ENCODE measurements at regions of chr2 and their contacts with region 1.

Region 1: GRCh38 chr2:177164584-177165052 is 48.0 kb upstream of the HNRNPA3 start:
- DNase-seq: peak in 1 of 2 donors; percentile 92
- H3K4me3 ChIP-seq: peak overlapping the region; percentile 24 to 41
- H3K27ac ChIP-seq: peak overlapping the region; percentile 93
- H3K4me1 ChIP-seq: peaks cover 44% of the 10 kb centered on the region
- H3K27me3 ChIP-seq: no peaks in the 10 kb centered on the region
- CTCF ChIP-seq: peak; percentile 92 to 100 (median 99)
- POLR2A ChIP-seq: no peak

Region 2: DNA sequence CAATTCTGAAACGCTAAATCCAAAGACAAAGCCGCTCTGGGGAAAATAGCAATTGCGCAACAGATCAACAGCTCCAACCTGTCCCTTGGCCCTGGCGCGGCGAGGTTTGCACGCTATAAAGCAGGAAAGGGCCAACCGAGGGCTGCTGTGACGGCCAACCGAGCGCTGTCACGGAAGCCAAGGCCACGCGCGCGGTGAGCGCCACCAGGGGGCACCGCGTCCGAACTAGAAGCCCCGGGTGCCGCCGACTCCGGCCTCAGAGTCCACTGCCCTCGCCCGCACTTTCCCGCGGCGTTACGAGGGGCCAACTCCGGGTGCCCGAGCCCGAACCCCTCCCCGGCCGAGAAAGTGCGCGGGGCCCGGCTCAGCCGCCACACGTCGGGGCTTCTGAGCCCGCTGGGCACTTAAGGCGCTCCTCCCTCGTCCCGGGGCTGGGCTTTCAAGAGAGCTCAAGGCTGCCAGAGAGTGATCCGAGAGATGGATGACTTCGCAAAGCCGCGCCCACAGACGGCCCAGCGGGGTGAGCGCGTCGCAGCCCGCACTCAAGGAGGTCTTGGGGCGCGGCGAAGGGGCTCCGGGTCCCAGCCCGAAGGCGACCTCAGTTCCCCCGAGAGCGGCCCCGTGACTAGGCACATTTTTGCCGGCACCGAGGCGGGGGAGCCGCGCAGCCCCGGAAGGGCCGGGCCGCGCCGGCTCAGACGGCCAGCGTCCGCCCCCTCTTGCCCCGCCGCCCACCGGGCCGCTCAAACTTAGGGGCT is 99.0 kb after region 1 on chr2:
- intact Hi-C with region 1: loop called (anchors 5 kb)
- DNase-seq: peak; percentile 98
- H3K4me3 ChIP-seq: peak overlapping the region; percentile 74 to 97
- H3K27ac ChIP-seq: peak overlapping the region; percentile 100
- H3K4me1 ChIP-seq: peaks cover 59% of the 10 kb centered on the region
- H3K27me3 ChIP-seq: no peaks in the 10 kb centered on the region
- CTCF ChIP-seq: peak; percentile 50 to 92 (median 68)
- POLR2A ChIP-seq: peak in 1 of 2 donors; percentile 48

Region 3: GRCh38 chr2:177281400-177282180 is 117.0 kb after region 1 on chr2:
- intact Hi-C with region 1: no loop called
- DNase-seq: no peak
- H3K4me3 ChIP-seq: no peak overlapping the region
- H3K27ac ChIP-seq: no peak overlapping the region
- H3K4me1 ChIP-seq: peaks cover 11% of the 10 kb centered on the region
- H3K27me3 ChIP-seq: no peaks in the 10 kb centered on the region
- CTCF ChIP-seq: no peak
- POLR2A ChIP-seq: no peak

Region 4: DNA sequence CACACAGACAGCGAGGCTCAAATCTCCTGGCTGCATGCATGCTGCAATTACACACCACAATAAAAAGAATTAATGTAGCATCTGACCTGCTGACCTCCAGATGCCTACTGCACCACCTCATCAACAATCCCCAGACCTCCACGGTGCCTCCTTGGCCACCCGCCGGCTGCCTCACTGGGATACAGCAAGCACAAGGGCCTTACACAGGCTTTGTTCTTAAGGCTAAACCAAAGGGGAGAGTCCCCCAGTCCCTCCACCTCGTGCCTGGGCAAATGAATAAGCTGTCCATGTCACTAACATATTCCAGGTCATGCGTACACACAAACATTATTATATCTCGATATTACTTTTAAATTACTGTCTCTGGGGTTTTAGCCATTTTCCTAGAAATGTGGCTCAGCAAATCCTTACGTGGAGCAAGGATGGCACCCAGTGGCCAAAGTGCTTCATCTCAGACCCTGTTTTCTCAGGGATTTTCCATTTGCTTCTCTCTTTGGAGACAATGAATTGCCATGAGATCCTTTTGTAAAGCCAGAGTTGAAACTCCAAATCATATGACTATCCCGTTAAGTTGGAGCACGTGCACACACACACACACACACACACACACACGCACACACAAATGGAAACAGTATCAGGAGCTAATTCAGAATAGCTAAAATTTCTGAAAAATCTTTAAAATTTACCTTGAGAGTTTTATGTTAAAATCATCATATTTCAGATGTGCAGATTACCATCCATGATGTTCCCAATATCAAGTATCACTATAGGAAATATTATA is 594.2 kb after region 1 on chr2:
- intact Hi-C with region 1: loop called (anchors 10 kb)
- DNase-seq: no peak
- H3K4me3 ChIP-seq: no peak overlapping the region
- H3K27ac ChIP-seq: no peak overlapping the region
- H3K4me1 ChIP-seq: no peaks in the 10 kb centered on the region
- H3K27me3 ChIP-seq: no peaks in the 10 kb centered on the region
- CTCF ChIP-seq: peak in 2 of 3 experiments; percentile 21 to 29
- POLR2A ChIP-seq: no peak

Measured in vagina (tissue), 2 donors.